CD8-positive, alpha-beta T cell (primary cell): ENCODE measurements at regions of chr1 and their contacts with region 1.

Region 1: DNA sequence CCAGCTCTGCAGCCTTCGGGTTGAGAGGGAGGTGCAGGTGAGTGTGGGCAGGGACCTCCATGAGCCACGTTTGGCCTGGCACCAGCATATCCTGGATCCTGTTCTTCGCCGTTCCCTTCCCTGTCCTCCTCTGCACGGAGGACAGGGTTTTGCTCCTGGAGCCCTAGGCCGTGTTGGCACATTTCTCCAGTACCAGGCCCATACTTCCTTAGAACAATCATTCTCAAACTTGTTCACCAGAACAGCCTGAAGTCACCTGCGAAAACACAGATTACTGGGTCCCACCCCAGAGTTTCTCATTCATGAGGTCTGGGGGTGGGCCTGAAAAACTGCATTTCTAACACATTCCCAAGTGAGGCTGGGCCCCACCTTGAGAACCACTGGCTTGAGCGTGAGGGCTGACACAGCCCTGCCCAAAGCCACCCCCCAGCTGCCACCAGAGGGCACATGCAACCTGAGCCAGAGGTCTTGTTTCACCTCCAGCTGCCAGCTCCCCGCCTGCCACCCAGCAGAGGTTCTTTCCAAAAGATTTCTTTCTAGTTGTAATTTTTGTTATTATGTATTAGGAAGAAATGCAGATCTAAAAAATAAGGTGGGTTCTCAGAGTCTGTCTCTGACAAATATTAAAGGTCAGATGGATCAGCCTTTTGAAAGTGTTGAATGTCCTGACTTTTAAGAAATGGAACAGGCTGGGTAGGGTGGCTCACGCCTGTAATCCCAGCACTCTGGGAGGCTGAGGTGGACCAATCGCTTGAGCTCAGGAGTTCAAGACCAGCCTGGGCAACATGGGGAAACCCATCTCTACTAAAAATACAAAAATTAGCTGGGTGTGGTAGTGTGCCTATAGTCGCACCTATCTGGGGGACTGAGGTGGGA is 39.6 kb upstream of the LDLRAP1 start:
- DNase-seq: peak; percentile 55 to 87 (median 76)
- ATAC-seq: peak; percentile 95
- H3K4me3 ChIP-seq: no peak overlapping the region
- H3K4me3 Mint-ChIP-seq: no peak overlapping the region
- H3K27ac ChIP-seq: no peak overlapping the region
- H3K27ac Mint-ChIP-seq: peak overlapping the region; percentile 32
- H3K4me1 ChIP-seq: peaks cover 24% of the 10 kb centered on the region
- H3K4me1 Mint-ChIP-seq: peaks cover 26% of the 10 kb centered on the region
- H3K27me3 ChIP-seq: no peaks in the 10 kb centered on the region
- H3K27me3 Mint-ChIP-seq: no peaks in the 10 kb centered on the region
- CTCF ChIP-seq: peak; percentile 69

Region 2: DNA sequence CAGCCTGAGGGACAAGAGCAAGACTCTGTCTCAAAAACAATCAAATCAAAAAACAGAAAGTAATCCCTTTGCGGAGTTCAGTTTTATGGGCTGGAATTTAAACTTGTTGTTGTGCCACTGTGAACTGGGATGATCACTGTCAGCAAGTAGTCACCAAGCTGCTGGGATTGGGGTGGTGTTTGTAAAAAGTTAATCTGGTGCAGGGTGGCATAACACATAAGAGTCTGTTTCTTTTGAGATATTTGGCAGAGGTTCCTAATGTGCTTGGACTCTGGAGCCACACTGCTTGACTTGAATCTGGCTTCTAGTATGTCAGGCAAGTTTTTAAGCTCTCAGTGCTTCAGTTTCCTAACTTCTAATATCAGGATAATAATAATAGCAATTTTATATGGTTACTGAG is 752.0 kb before region 1 on chr1:
- CTCF ChIA-PET with region 1: no interaction called
- POLR2A ChIA-PET with region 1: no interaction called
- intact Hi-C with region 1: no loop called
- DNase-seq: no peak
- ATAC-seq: no peak
- H3K4me3 ChIP-seq: no peak overlapping the region
- H3K4me3 Mint-ChIP-seq: no peak overlapping the region
- H3K27ac ChIP-seq: no peak overlapping the region
- H3K27ac Mint-ChIP-seq: no peak overlapping the region
- H3K4me1 ChIP-seq: no peaks in the 10 kb centered on the region
- H3K4me1 Mint-ChIP-seq: no peaks in the 10 kb centered on the region
- H3K27me3 ChIP-seq: no peaks in the 10 kb centered on the region
- H3K27me3 Mint-ChIP-seq: no peaks in the 10 kb centered on the region
- CTCF ChIP-seq: no peak

Region 3: GRCh38 chr1:25520446-25521061 is 16.8 kb after region 1 on chr1:
- CTCF ChIA-PET with region 1: interaction called, 238 read pairs
- POLR2A ChIA-PET with region 1: interaction called, 10 read pairs
- intact Hi-C with region 1: loop called (anchors 1 kb)
- DNase-seq: peak; percentile 52 to 88 (median 78)
- ATAC-seq: peak; percentile 73
- H3K4me3 ChIP-seq: no peak overlapping the region
- H3K4me3 Mint-ChIP-seq: no peak overlapping the region
- H3K27ac ChIP-seq: no peak overlapping the region
- H3K27ac Mint-ChIP-seq: peak overlapping the region; percentile 25
- H3K4me1 ChIP-seq: peaks cover 5% of the 10 kb centered on the region
- H3K4me1 Mint-ChIP-seq: peaks cover 10% of the 10 kb centered on the region
- H3K27me3 ChIP-seq: no peaks in the 10 kb centered on the region
- H3K27me3 Mint-ChIP-seq: no peaks in the 10 kb centered on the region
- CTCF ChIP-seq: peak; percentile 83

Region 4: GRCh38 chr1:25566730-25567341 is 63.0 kb after region 1 on chr1:
- CTCF ChIA-PET with region 1: interaction called, 62 read pairs
- POLR2A ChIA-PET with region 1: interaction called, 9 read pairs
- intact Hi-C with region 1: loop called (anchors 1 to 2 kb)
- DNase-seq: peak in 7 of 9 experiments; percentile 40 to 82 (median 74)
- ATAC-seq: peak; percentile 27
- H3K4me3 ChIP-seq: peak overlapping the region in 1 of 2 experiments; percentile 85
- H3K4me3 Mint-ChIP-seq: peak overlapping the region; percentile 95
- H3K27ac ChIP-seq: peak overlapping the region in 1 of 2 experiments; percentile 25
- H3K27ac Mint-ChIP-seq: peak overlapping the region; percentile 96
- H3K4me1 ChIP-seq: peaks cover 73% of the 10 kb centered on the region
- H3K4me1 Mint-ChIP-seq: peaks cover 86% of the 10 kb centered on the region
- H3K27me3 ChIP-seq: no peaks in the 10 kb centered on the region
- H3K27me3 Mint-ChIP-seq: no peaks in the 10 kb centered on the region
- CTCF ChIP-seq: peak; percentile 49

Region 5: GRCh38 chr1:25608488-25609178 is 104.8 kb after region 1 on chr1:
- CTCF ChIA-PET with region 1: interaction called, 21 read pairs
- POLR2A ChIA-PET with region 1: interaction called, 3 read pairs
- intact Hi-C with region 1: no loop called
- DNase-seq: peak; percentile 63 to 93 (median 90)
- ATAC-seq: peak; percentile 99
- H3K4me3 ChIP-seq: no peak overlapping the region
- H3K4me3 Mint-ChIP-seq: no peak overlapping the region
- H3K27ac ChIP-seq: no peak overlapping the region
- H3K27ac Mint-ChIP-seq: no peak overlapping the region
- H3K4me1 ChIP-seq: peaks cover 3% of the 10 kb centered on the region
- H3K4me1 Mint-ChIP-seq: peaks cover 12% of the 10 kb centered on the region
- H3K27me3 ChIP-seq: no peaks in the 10 kb centered on the region
- H3K27me3 Mint-ChIP-seq: no peaks in the 10 kb centered on the region
- CTCF ChIP-seq: no peak

Region 6: GRCh38 chr1:25802915-25803314 is 299.1 kb after region 1 on chr1:
- CTCF ChIA-PET with region 1: interaction called, 56 read pairs
- POLR2A ChIA-PET with region 1: interaction called, 3 read pairs
- intact Hi-C with region 1: loop called in 1 of 2 experiments (anchors 5 kb)
- DNase-seq: peak in 1 of 9 experiments; percentile 36
- ATAC-seq: no peak
- H3K4me3 ChIP-seq: no peak overlapping the region
- H3K4me3 Mint-ChIP-seq: peak overlapping the region; percentile 16
- H3K27ac ChIP-seq: no peak overlapping the region
- H3K27ac Mint-ChIP-seq: peak overlapping the region; percentile 16
- H3K4me1 ChIP-seq: peaks cover 42% of the 10 kb centered on the region
- H3K4me1 Mint-ChIP-seq: peaks cover 56% of the 10 kb centered on the region
- H3K27me3 ChIP-seq: no peaks in the 10 kb centered on the region
- H3K27me3 Mint-ChIP-seq: no peaks in the 10 kb centered on the region
- CTCF ChIP-seq: no peak